Activated CD8-positive, alpha-beta T cell treated with anti-CD3 and anti-CD28 coated beads, Interleukin-2, amount 10 ng/mL, durations not matched to agents 7 days and 5 days (primary cell): ENCODE measurements at regions of chr1 and their contacts with region 1.

Region 1: GRCh38 chr1:161440312-161440894 is 64.9 kb upstream of the FCGR2A start:
- DNase-seq: peak; percentile 76
- ATAC-seq: peak; percentile 71
- H3K4me3 Mint-ChIP-seq: peak overlapping the region; percentile 86
- H3K27ac Mint-ChIP-seq: peak overlapping the region; percentile 92
- H3K4me1 Mint-ChIP-seq: peaks cover 14% of the 10 kb centered on the region
- H3K27me3 Mint-ChIP-seq: peaks cover 30% of the 10 kb centered on the region

Region 2: DNA sequence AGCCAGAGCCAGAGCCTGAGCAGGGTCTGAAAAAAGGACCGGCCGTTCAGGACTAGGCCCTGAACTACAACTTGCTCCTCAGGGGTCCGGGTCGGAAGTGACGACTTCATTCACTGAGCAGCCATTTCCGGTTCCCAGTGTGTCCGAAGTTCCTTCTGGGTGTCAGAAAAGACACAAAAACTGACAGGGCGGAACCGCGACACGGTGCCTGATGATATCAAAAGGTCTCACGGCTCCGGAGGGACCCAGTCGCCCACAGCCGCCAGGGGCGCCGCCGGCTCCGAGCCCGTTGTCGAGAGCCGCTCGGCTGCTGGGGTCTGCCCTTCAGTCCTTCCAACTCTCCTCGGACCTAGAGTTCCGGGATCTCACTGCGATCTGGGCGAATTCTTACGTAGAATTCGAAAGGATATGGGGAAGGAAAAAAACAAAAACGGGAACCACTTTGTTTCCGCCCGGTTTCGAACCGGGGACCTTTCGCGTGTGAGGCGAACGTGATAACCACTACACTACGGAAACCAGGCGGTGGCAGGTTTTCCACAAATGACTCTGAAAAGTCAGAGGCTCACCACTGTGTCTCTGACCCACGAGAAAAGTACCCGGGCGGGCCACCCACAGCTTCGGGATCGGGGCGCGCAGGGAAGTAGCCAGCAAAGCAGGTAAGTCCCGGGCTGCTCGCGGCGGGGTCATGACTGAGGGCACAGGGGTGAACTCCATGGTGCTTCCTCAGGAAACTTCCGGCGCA is 41.0 kb before region 1 on chr1:
- CTCF ChIA-PET with region 1: interaction called, 13 read pairs
- POLR2A ChIA-PET with region 1: interaction called, 5 read pairs
- DNase-seq: peak; percentile 93
- ATAC-seq: peak; percentile 88
- H3K4me3 Mint-ChIP-seq: peak overlapping the region; percentile 95
- H3K27ac Mint-ChIP-seq: peak overlapping the region; percentile 100
- H3K4me1 Mint-ChIP-seq: peaks cover 44% of the 10 kb centered on the region
- H3K27me3 Mint-ChIP-seq: peaks cover 2% of the 10 kb centered on the region

Region 3: GRCh38 chr1:161408429-161409052 is 31.9 kb before region 1 on chr1:
- CTCF ChIA-PET with region 1: interaction called, 10 read pairs
- POLR2A ChIA-PET with region 1: interaction called, 3 read pairs
- DNase-seq: no peak
- ATAC-seq: no peak
- H3K4me3 Mint-ChIP-seq: no peak overlapping the region
- H3K27ac Mint-ChIP-seq: no peak overlapping the region
- H3K4me1 Mint-ChIP-seq: peaks cover 29% of the 10 kb centered on the region
- H3K27me3 Mint-ChIP-seq: no peaks in the 10 kb centered on the region

Region 4: GRCh38 chr1:161427733-161428516 is 12.5 kb before region 1 on chr1:
- CTCF ChIA-PET with region 1: interaction called, 17 read pairs
- POLR2A ChIA-PET with region 1: no interaction called
- DNase-seq: peak; percentile 39
- ATAC-seq: no peak
- H3K4me3 Mint-ChIP-seq: peak overlapping the region; percentile 18
- H3K27ac Mint-ChIP-seq: no peak overlapping the region
- H3K4me1 Mint-ChIP-seq: peaks cover 8% of the 10 kb centered on the region
- H3K27me3 Mint-ChIP-seq: peaks cover 35% of the 10 kb centered on the region